ENCODE measurements at regions of chr7 and their contacts with region 1.

Region 1: DNA sequence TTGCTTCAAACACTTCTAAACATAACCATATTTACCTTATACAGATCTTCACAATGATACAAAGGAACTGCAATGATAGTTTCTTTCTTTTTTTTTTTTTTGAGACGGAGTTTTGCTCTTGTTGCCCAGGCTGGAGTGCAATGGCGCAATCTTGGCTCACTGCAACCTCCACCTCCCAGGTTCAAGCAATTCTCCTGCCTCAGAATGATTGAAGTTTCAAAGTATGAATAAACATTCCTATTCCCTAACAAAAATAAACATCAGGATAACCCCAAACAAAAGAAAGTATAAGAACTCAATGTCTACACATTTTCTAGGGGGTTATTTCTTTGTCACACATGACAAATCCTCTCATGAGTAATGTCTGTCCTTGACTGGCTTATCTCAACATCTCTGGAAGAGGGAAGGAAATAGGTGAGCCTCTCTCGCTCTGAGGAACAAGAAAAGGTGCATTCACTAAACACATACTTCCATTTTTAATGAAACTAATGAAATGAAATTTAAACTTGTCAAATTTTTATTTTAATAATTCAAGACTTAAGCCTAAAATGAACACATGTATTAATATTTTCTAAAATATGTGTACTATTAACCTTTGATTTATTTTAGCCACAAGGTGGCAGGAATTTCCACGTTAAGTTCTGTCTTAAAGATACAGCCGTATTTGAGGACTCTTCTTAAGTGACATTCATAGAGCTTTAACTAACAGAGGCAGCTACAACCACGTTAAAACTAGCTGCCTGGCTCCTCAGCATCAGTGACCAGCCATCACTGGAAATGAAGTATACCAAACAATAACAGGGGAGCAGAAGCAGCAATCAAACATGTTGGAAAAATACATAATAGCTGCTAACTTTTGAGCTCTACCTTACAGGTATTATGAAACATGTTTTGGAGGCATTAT is 58.3 kb downstream of the MALSU1 start:
- DNase-seq: peak in 1 of 2 experiments; percentile 62
- H3K4me3 ChIP-seq: no peak overlapping the region
- H3K4me3 Mint-ChIP-seq: peak overlapping the region; percentile 37
- H3K27ac Mint-ChIP-seq: peak overlapping the region; percentile 50
- H3K4me1 ChIP-seq: peaks cover 20% of the 10 kb centered on the region
- H3K4me1 Mint-ChIP-seq: peaks cover 23% of the 10 kb centered on the region
- H3K27me3 ChIP-seq: no peaks in the 10 kb centered on the region
- H3K27me3 Mint-ChIP-seq: no peaks in the 10 kb centered on the region
- CTCF ChIP-seq: peak; percentile 37 to 50

Region 2: GRCh38 chr7:23264916-23265458 is 92.5 kb before region 1 on chr7:
- CTCF ChIA-PET with region 1: no interaction called
- POLR2A ChIA-PET with region 1: no interaction called
- intact Hi-C with region 1: no loop called
- DNase-seq: no peak
- H3K4me3 ChIP-seq: no peak overlapping the region
- H3K4me3 Mint-ChIP-seq: no peak overlapping the region
- H3K27ac Mint-ChIP-seq: no peak overlapping the region
- H3K4me1 ChIP-seq: no peaks in the 10 kb centered on the region
- H3K4me1 Mint-ChIP-seq: peaks cover 7% of the 10 kb centered on the region
- H3K27me3 ChIP-seq: no peaks in the 10 kb centered on the region
- H3K27me3 Mint-ChIP-seq: no peaks in the 10 kb centered on the region
- CTCF ChIP-seq: no peak

Region 3: GRCh38 chr7:23334482-23335056 is 22.9 kb before region 1 on chr7:
- CTCF ChIA-PET with region 1: interaction called, 4 read pairs
- POLR2A ChIA-PET with region 1: no interaction called
- intact Hi-C with region 1: loop called (anchors 1 kb)
- DNase-seq: peak; percentile 45 to 63
- H3K4me3 ChIP-seq: no peak overlapping the region
- H3K4me3 Mint-ChIP-seq: peak overlapping the region; percentile 16
- H3K27ac Mint-ChIP-seq: peak overlapping the region; percentile 13
- H3K4me1 ChIP-seq: peaks cover 40% of the 10 kb centered on the region
- H3K4me1 Mint-ChIP-seq: peaks cover 23% of the 10 kb centered on the region
- H3K27me3 ChIP-seq: no peaks in the 10 kb centered on the region
- H3K27me3 Mint-ChIP-seq: no peaks in the 10 kb centered on the region
- CTCF ChIP-seq: no peak

Region 4: GRCh38 chr7:23378996-23379395 is 21.6 kb after region 1 on chr7:
- CTCF ChIA-PET with region 1: interaction called, 6 read pairs
- POLR2A ChIA-PET with region 1: interaction called, 10 read pairs
- intact Hi-C with region 1: loop called (anchors 1 kb)
- DNase-seq: peak; percentile 65 to 77
- H3K4me3 ChIP-seq: no peak overlapping the region
- H3K4me3 Mint-ChIP-seq: peak overlapping the region; percentile 48
- H3K27ac Mint-ChIP-seq: peak overlapping the region; percentile 51
- H3K4me1 ChIP-seq: peaks cover 73% of the 10 kb centered on the region
- H3K4me1 Mint-ChIP-seq: peaks cover 56% of the 10 kb centered on the region
- H3K27me3 ChIP-seq: no peaks in the 10 kb centered on the region
- H3K27me3 Mint-ChIP-seq: no peaks in the 10 kb centered on the region
- CTCF ChIP-seq: no peak

Region 5: DNA sequence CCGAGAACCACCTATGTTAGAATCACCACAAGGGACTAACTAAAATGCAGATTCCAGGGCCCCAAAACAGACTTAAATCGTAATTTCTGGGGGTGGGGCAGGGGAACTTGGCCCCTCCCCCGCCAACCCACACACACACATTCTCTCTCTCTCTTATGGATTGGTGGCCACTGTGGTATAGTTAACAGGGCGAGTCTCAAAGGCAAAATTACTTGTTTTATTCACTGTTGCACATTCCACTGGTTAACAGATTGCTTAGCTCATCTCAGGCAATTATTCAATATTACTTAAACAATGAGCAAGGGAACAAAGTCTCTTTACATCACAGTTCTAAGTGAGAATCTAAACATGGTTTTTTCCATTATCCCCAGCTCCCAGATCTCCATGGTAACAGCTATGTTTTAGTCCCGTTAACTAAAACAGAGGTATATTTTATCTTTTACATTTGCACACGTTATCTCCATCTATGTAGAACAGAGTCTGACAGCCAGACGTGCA is 74.3 kb after region 1 on chr7:
- CTCF ChIA-PET with region 1: interaction called, 5 read pairs
- POLR2A ChIA-PET with region 1: interaction called, 4 read pairs
- intact Hi-C with region 1: loop called (anchors 2 kb)
- DNase-seq: peak in 1 of 2 experiments; percentile 36
- H3K4me3 ChIP-seq: no peak overlapping the region
- H3K4me3 Mint-ChIP-seq: peak overlapping the region; percentile 14
- H3K27ac Mint-ChIP-seq: peak overlapping the region; percentile 79
- H3K4me1 ChIP-seq: peaks cover 19% of the 10 kb centered on the region; the same call in 1 of the 2 replicates
- H3K4me1 Mint-ChIP-seq: peaks cover 36% of the 10 kb centered on the region
- H3K27me3 ChIP-seq: no peaks in the 10 kb centered on the region
- H3K27me3 Mint-ChIP-seq: no peaks in the 10 kb centered on the region
- CTCF ChIP-seq: no peak

Region 6: DNA sequence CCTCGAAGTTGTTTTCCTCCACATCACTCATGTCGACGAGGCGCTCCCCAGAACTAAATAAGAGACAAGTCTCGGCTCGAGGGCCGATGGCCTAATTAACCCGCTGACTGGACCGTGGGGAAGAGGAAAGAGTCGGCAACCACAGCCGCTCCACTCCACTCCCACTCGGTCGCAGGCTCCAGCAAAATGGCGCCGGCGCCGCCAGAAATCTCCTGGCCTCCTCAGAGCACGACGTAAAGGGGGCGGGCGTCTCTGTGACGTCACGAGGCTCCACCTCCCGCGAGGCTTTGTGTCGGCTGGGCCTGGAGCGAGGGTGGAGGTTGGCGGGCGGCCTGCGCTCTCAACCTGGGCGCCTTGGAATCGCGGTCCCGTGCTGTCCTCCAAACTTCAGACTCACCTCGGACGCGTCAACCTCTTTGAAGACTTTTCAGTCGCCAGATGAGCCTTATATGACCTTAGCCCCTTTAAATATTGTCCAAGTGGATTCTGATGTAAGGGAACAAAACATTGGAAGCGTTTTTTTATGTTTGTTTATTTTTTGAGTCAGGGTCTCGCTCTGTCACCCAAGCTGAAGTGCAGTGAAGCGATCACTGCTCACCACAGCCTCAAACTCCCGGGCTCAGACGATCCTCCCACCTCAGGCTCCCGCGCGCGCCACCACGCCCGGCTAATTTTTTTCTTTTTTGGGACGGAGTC is 174.5 kb after region 1 on chr7 and contains the start of gene TRA2A:
- CTCF ChIA-PET with region 1: no interaction called
- POLR2A ChIA-PET with region 1: no interaction called
- intact Hi-C with region 1: loop called (anchors 5 kb)
- DNase-seq: peak; percentile 97
- H3K4me3 ChIP-seq: peak within 1 kb of the TSS; percentile 99
- H3K4me3 Mint-ChIP-seq: peak within 1 kb of the TSS; percentile 91
- H3K27ac Mint-ChIP-seq: peak within 1 kb of the TSS; percentile 99
- H3K4me1 ChIP-seq: peaks cover 19% of the 10 kb centered on the region
- H3K4me1 Mint-ChIP-seq: peaks cover 16% of the 10 kb centered on the region
- H3K27me3 ChIP-seq: no peaks in the 10 kb centered on the region
- H3K27me3 Mint-ChIP-seq: no peaks in the 10 kb centered on the region
- CTCF ChIP-seq: no peak
- total RNA-seq, gene TRA2A: 123 and 132 TPM in 2 replicates

Region 7: DNA sequence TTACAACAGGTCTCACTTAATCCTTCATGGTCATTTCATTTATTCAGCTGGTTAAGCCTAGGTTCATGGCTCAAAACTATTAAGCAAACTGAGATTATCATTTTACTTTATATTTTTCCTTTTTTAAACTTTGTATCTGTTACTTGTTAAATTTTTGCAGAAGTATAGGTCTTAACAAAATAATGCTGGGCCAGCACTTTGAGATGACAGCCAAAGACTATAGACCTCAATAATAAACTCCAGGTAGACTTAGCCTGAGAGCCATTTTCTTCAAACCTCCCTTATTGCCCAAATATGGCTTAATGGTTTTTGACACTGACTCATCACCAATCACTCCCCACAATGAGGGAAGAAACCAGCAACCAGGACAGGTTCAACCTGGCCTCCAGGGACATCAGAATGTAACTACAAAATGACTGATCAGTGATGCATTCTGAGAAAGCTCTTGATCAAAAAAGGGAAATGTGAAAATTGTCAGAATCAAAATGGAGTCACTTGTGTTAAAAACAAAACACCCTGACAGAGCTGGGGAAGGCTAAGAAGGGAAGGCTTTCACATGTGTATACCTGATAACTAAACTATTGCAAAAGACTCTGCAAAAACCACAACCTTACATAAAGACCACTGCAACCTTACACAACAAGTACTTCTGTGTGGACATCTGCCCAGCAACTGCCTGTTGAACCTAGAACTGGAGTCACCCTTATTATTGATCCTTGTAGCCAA is 237.6 kb after region 1 on chr7:
- CTCF ChIA-PET with region 1: no interaction called
- POLR2A ChIA-PET with region 1: no interaction called
- intact Hi-C with region 1: no loop called
- DNase-seq: no peak
- H3K4me3 ChIP-seq: no peak overlapping the region
- H3K4me3 Mint-ChIP-seq: no peak overlapping the region
- H3K27ac Mint-ChIP-seq: no peak overlapping the region
- H3K4me1 ChIP-seq: peaks cover 12% of the 10 kb centered on the region
- H3K4me1 Mint-ChIP-seq: peaks cover 15% of the 10 kb centered on the region
- H3K27me3 ChIP-seq: no peaks in the 10 kb centered on the region
- H3K27me3 Mint-ChIP-seq: peaks cover 4% of the 10 kb centered on the region
- CTCF ChIP-seq: no peak